Activated naive CD4-positive, alpha-beta T cell treated with anti-CD3 and anti-CD28 coated beads for 36 hours (primary cell): ENCODE measurements at regions of chr7 and their contacts with region 1.

Region 1: GRCh38 chr7:105876091-105876963 is at the start of gene ATXN7L1:
- DNase-seq: peak; percentile 93
- H3K4me3 Mint-ChIP-seq: peak within 1 kb of the TSS; percentile 91
- H3K27ac Mint-ChIP-seq: peak within 1 kb of the TSS; percentile 82
- H3K4me1 Mint-ChIP-seq: peaks cover 58% of the 10 kb centered on the region
- H3K27me3 Mint-ChIP-seq: no peaks in the 10 kb centered on the region
- total RNA-seq, gene ATXN7L1: 8.8 to 9.2 TPM

Region 2: DNA sequence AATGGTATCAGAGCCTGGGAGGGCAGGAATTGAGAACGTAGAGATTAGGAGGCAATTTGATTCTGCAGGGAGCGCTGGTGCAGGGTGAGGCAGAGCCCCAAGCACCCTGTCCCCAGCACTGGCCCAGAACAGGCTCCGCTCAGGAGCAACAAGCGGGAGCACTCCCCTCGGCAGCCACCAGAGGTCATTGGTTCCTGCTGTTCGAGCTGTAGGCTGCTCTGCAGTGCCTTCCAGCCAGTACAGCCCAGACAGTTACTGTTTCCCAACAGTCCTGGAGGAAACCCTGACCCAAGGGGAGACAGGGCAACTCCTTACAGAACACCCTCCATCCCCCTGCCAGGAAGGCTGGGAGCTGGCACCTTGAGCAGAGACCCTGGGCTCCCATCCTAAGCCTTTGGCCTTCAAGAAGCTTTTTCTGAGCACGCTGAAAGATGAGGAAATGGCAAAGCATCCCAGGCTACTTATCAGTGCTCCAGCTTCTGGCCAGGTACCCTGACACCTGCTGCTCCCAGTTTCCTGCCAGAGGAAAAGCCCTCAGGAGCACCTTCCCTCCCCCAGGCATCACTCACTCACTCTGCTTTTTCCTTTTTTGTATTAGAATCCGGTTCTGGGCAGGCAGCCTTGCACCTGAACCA is 223.9 kb before region 1 on chr7:
- CTCF ChIA-PET with region 1: interaction called, 4 read pairs
- intact Hi-C with region 1: loop called (anchors 2 kb)
- DNase-seq: peak; percentile 79
- H3K4me3 Mint-ChIP-seq: no peak overlapping the region
- H3K27ac Mint-ChIP-seq: no peak overlapping the region
- H3K4me1 Mint-ChIP-seq: peaks cover 10% of the 10 kb centered on the region
- H3K27me3 Mint-ChIP-seq: no peaks in the 10 kb centered on the region

Region 3: GRCh38 chr7:105691733-105692564 is 184.4 kb before region 1 on chr7:
- CTCF ChIA-PET with region 1: interaction called, 3 read pairs
- intact Hi-C with region 1: loop called (anchors 1 kb)
- DNase-seq: peak; percentile 80
- H3K4me3 Mint-ChIP-seq: peak overlapping the region; percentile 77
- H3K27ac Mint-ChIP-seq: peak overlapping the region; percentile 79
- H3K4me1 Mint-ChIP-seq: peaks cover 36% of the 10 kb centered on the region
- H3K27me3 Mint-ChIP-seq: no peaks in the 10 kb centered on the region

Region 4: DNA sequence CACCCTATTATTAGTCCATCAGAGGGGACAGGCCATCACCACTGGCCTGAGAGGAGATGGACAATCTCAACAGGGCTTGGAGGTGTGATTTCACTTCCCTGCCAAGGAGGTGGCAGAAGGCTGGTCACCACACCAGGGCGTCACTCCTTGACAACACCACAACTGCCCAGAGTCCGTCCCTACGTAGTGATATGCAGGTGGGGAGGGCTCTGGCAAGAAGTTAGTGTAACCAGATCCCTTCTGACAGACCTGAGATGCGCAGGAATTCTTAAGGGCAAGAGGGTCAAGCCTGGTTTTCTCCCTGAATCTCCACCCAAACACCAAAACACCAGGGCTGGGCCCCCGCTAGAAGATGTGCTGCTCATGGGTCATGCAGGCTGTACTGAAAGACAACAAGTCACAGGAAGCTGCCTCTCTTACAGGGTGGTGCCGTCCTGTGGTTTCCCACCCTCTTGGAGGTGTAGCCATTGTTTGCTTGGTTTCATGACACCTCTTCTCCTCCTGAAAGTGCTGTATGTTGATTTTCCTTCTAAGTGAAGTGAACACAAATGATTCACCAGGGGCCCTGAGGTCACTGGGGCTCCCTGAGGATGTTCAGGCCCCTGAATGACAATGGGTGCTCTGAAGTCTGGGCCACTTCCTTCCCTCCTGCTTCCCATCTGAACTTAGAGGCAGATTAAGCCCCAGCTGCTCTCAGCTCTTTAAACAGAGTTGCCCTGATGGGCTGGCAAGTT is 27.0 kb before region 1 on chr7:
- CTCF ChIA-PET with region 1: interaction called, 5 read pairs
- intact Hi-C with region 1: loop called (anchors 1 kb)
- DNase-seq: peak; percentile 83
- H3K4me3 Mint-ChIP-seq: no peak overlapping the region
- H3K27ac Mint-ChIP-seq: no peak overlapping the region
- H3K4me1 Mint-ChIP-seq: peaks cover 44% of the 10 kb centered on the region
- H3K27me3 Mint-ChIP-seq: no peaks in the 10 kb centered on the region

Region 5: DNA sequence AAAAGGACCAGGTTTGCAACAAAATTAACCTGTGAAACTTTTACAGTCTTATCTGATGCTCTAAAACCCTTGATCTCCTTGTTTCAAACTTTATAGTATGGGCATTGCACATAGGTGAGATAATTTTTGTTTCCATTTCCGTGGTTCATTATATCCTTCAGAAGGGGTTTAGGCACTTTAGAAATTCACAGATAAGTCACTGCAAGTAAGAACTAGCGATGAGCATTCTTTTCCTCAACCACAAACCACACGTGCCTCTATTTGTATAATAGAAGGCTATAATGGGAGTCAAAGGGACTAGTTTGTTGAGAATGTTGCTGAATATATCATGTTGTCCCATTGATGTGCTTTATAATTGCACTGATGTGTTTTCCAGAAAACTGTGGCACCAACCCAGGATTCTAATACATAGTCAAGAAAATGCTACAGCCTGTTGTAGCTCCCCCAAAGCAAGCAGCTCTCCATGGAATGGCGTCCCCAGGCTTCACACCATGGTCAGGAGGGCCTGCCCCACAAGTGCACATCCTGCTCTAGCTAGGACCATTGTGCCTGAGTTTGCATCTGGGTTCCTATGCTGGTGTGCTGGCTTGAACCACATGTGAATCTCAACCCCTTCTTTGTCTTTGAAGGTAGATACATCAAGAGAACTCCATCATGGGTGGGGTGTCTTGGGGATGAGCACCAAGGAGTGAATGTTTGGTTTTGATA is 14.1 kb after region 1 on chr7:
- CTCF ChIA-PET with region 1: interaction called, 8 read pairs
- intact Hi-C with region 1: loop called (anchors 1 kb)
- DNase-seq: peak; percentile 72
- H3K4me3 Mint-ChIP-seq: no peak overlapping the region
- H3K27ac Mint-ChIP-seq: no peak overlapping the region
- H3K4me1 Mint-ChIP-seq: peaks cover 29% of the 10 kb centered on the region
- H3K27me3 Mint-ChIP-seq: no peaks in the 10 kb centered on the region

Region 6: GRCh38 chr7:106009403-106010226 is 133.3 kb after region 1 on chr7:
- CTCF ChIA-PET with region 1: interaction called, 6 read pairs
- intact Hi-C with region 1: loop called (anchors 1 kb)
- DNase-seq: peak; percentile 89
- H3K4me3 Mint-ChIP-seq: no peak overlapping the region
- H3K27ac Mint-ChIP-seq: no peak overlapping the region
- H3K4me1 Mint-ChIP-seq: peaks cover 22% of the 10 kb centered on the region
- H3K27me3 Mint-ChIP-seq: no peaks in the 10 kb centered on the region

Region 7: DNA sequence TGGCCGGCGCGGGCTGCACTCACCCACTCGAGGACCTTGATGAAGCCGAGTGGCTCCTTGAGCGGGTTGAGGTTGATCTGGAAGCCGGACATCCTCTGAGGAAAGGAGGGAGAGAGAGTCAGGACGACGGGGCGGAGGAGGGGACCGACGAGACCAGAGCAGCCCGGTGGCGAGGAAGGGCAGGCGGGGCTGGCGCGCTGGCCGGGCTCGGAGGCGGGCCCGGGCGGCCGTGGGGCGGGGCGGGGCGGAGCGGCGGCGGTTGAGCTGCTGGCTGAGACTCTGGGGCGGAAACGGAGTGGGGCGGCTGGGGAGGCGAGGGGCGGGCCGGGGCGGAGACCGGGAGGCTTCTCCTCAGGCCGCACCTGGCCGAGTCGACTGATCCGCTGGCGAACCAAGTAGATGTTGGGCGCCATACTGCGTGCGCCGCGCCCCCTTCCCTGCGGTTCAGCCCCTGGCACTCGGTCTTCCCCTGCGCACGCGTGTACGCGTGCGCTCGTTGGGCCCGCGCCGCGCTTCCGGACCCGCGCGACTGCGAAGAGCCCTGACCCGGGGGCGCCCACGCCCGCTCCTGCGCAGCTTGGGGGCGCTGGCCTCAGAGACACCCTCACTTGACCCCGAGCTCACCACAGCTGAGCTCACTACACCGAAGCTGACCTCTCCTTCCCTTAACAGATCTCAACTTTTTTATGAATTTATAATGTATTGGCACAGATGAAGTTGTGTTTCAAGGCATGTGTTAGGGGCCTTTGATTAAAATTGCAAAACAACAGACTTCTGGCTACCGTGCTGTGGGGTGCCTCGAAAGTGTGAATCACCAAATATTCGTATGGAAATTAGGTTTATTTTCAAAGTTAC is 236.0 kb after region 1 on chr7 and contains the start of gene SYPL1:
- CTCF ChIA-PET with region 1: no interaction called
- intact Hi-C with region 1: no loop called
- DNase-seq: peak; percentile 94
- H3K4me3 Mint-ChIP-seq: peak within 1 kb of the TSS; percentile 85
- H3K27ac Mint-ChIP-seq: peak within 1 kb of the TSS; percentile 92
- H3K4me1 Mint-ChIP-seq: peaks cover 71% of the 10 kb centered on the region
- H3K27me3 Mint-ChIP-seq: no peaks in the 10 kb centered on the region
- total RNA-seq, gene SYPL1: 24.7 to 26.6 TPM